Right lobe of liver (tissue), 6 donors: ENCODE measurements at regions of chr12 and their contacts with region 1.

Region 1: GRCh38 chr12:124680863-124681778 is 113.7 kb upstream of the NCOR2 start:
- DNase-seq: peak; percentile 80 to 85 (median 83)
- ATAC-seq: peak; percentile 56 to 73 (median 62)
- H3K4me3 ChIP-seq: no peak overlapping the region
- H3K27ac ChIP-seq: peak overlapping the region; percentile 85 to 95 (median 92)
- H3K4me1 ChIP-seq: peaks cover 0 to 53% (median 24%) of the 10 kb centered on the region in 4 donors
- H3K27me3 ChIP-seq: no peaks in the 10 kb centered on the region
- CTCF ChIP-seq: peak in 3 of 4 donors; percentile 5 to 20 (median 9)
- POLR2A ChIP-seq: no peak

Region 2: GRCh38 chr12:124518051-124518932 is 162.8 kb before region 1 on chr12:
- intact Hi-C with region 1: loop called in 1 of 2 experiments (anchors 10 kb)
- DNase-seq: peak; percentile 95 to 98 (median 97)
- ATAC-seq: peak; percentile 66 to 72 (median 70)
- H3K4me3 ChIP-seq: peak overlapping the region; percentile 13 to 47 (median 42)
- H3K27ac ChIP-seq: peak overlapping the region; percentile 76 to 95 (median 87)
- H3K4me1 ChIP-seq: peaks cover 0 to 38% (median 19%) of the 10 kb centered on the region in 4 donors
- H3K27me3 ChIP-seq: no peaks in the 10 kb centered on the region
- CTCF ChIP-seq: no peak
- POLR2A ChIP-seq: no peak

Region 3: GRCh38 chr12:124646385-124647230 is 34.5 kb before region 1 on chr12:
- intact Hi-C with region 1: no loop called
- DNase-seq: no peak
- ATAC-seq: peak in 2 of 4 donors; percentile 32 to 42
- H3K4me3 ChIP-seq: no peak overlapping the region
- H3K27ac ChIP-seq: no peak overlapping the region
- H3K4me1 ChIP-seq: peaks cover 0 to 3% (median 0%) of the 10 kb centered on the region in 4 donors
- H3K27me3 ChIP-seq: no peaks in the 10 kb centered on the region
- CTCF ChIP-seq: no peak
- POLR2A ChIP-seq: no peak

Region 4: GRCh38 chr12:124720004-124720680 is 39.0 kb after region 1 on chr12:
- intact Hi-C with region 1: no loop called
- DNase-seq: no peak
- ATAC-seq: peak; percentile 5 to 47 (median 14)
- H3K4me3 ChIP-seq: no peak overlapping the region
- H3K27ac ChIP-seq: peak overlapping the region in 1 of 3 donors; percentile 2
- H3K4me1 ChIP-seq: peaks cover 0 to 10% (median 0%) of the 10 kb centered on the region in 4 donors
- H3K27me3 ChIP-seq: no peaks in the 10 kb centered on the region
- CTCF ChIP-seq: peak in 2 of 4 donors; percentile 9 to 15
- POLR2A ChIP-seq: no peak

Region 5: DNA sequence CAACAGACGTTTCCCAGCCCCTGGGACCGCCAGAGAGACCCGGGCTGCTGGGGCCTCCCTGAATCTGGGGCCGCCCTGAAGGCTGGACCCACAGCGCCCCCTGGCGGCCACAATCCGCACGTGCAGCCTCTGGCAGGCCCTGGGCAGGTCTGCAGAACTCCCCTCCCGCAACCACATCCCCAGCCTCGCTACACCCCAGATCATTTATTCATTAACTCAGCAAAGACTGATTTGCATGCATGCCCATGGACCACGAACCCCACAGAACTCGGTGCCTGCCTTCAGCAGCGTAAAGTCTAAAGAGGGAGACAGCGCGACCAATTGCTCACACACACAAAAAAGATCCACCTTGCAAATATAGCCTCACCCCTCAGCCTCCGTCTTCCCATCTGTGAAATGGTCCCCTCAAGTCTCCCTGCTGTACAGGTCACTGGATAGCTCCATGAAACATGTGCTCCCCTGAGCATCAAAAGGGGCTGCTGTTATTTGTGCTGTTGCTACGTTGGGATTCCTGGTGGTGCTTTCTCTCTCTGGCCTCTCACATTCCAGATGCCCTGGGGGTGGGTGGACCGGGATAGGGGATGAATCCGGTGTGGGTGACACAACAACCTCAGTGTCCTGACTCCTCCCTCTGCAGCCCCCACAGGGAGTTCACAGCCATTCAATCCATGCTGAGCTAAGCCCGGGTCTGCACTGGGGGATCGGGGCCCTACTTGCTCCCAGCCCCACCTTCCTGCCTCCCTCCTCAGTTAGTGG is 86.1 kb after region 1 on chr12:
- intact Hi-C with region 1: no loop called
- DNase-seq: peak; percentile 75 to 85 (median 83)
- ATAC-seq: peak; percentile 83 to 91 (median 86)
- H3K4me3 ChIP-seq: no peak overlapping the region
- H3K27ac ChIP-seq: no peak overlapping the region
- H3K4me1 ChIP-seq: peaks cover 0 to 20% (median 0%) of the 10 kb centered on the region in 4 donors
- H3K27me3 ChIP-seq: no peaks in the 10 kb centered on the region
- CTCF ChIP-seq: peak in 3 of 4 donors; percentile 96 to 99 (median 98)
- POLR2A ChIP-seq: no peak